Posterior cingulate gyrus (tissue), 11 donors: ENCODE measurements at regions of chr14 and their contacts with region 1.

Region 1: DNA sequence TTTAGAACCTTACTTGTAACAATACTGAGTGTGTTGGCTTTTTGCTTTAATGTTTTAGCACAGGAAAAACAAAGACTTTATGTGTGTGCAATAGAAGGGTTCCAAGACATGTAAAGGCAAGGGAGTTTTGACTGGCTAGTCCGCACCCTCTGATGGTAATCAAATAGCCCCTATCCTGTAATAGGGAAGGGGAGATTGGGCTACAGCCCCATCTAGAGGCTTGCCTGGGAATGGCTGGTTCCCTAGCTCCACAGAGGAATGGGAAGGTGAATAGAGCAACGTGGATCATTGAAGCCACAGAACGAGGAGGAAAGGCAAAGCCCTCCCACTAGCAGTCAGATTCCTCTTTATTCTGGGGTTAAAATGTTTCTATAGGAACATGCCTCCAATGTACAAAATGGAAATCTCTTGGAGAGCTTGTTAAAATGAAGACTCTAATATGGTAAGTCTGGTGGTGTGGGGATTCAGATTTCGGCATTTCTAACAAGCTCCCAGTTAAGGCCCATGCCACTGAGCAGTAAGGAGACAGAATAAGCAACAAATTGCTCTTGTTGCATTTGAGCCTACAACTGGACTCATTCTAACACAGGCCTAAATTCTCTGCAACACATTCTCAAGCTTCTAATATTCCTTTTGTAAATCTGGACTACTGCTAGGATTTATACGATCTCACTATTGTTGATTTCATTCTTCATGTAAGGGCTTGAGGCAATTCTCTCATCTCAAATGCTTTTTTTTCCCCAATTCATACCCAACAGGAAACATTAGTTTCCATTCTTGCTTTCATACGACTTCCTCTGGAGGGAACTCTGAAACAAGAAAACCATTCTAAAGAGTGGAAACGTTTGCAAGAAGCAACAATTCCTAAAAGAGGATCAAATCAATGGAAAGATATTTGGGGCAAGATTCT is 57.1 kb downstream of the NIN start:
- DNase-seq: peak in 6 of 10 donors; percentile 66 to 91 (median 70)

Region 2: DNA sequence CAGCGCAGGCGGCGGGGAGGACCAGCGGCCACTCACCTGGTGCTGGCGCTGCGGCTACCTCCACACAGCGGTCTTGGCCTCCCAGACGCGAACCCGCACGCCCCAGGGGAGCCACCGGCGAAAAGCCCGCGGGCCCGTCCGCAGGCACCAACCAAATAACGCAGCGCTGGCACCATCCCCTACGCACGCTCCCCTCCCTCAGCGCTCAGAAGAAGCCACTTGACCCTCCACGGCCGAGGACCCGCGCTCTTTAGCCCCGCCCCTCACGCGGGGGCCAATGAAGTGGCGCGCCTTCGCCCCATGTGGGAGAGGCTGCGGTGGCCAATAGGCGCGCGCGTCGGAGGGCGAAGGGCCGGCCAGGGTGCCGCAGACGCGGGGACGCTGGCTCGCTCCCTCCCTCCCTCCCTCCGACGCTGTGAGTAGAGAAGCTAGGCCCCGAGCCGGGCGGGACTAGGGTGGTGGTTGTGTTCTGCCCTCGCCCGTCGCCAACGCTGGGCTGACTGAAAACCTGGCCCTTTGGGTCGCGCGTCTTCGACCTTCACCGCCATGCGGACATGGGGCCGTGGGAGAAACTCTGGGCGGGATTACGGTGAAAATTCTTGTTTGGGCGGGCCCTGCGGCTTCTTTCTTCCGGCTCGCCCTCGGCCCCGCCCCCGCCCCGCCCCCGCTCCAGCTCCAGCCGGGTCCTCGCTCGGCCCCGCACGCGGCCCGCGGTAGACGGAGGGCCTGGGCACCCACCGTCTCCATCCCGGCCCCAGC is 461.7 kb before region 1 on chr14 and contains the starts of genes DMAC2L and L2HGDH:
- intact Hi-C with region 1: loop called (anchors 10 kb)
- DNase-seq: peak; percentile 88 to 99 (median 93)

Region 3: DNA sequence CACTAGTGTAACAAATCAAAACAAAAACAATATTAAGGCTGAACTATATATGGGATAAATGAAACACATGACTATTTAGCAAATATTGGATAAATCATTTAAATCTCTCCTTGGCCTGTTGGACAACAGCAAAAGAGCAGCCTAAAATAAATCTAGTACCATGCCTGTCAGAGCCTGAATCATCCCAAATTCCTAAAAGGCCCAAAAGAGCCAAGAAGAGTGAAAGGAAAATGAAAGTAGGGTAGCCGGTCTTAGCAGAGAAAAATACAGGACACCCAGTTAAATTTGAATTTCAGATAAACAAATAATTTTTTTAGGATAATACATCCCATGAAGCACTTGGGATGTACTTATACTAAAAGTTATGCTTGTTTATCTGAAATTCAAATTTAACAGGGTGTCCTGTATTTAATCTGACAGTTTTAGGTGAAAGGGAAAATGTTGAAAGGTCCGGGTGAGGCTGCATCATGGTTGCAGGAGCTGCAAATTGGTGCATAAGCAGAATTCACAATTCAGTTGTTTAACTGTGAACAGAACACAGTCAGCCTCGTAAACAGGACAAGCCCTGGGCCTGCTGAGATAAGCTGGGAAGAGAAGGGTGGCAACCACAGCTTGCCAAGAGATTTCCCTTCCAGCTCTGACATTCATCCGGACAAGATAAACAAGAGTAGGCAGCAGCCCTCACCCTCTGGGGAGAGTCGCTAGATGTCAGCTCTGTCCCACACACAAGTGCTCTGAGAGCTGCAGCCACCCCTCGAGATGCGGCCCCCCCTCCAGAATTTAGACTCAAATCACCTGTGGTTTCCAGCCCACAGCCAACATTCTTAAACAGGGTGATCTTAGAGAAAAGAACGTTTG is 431.4 kb before region 1 on chr14:
- intact Hi-C with region 1: loop called (anchors 10 kb)
- DNase-seq: peak; percentile 50 to 95 (median 75)

Region 4: GRCh38 chr14:50542941-50543418 is 230.9 kb before region 1 on chr14:
- intact Hi-C with region 1: loop called (anchors 5 kb)
- DNase-seq: peak in 1 of 10 donors; percentile 35

Region 5: GRCh38 chr14:50599700-50600444 is 174.0 kb before region 1 on chr14:
- intact Hi-C with region 1: loop called (anchors 2 kb)
- DNase-seq: no peak

Region 6: DNA sequence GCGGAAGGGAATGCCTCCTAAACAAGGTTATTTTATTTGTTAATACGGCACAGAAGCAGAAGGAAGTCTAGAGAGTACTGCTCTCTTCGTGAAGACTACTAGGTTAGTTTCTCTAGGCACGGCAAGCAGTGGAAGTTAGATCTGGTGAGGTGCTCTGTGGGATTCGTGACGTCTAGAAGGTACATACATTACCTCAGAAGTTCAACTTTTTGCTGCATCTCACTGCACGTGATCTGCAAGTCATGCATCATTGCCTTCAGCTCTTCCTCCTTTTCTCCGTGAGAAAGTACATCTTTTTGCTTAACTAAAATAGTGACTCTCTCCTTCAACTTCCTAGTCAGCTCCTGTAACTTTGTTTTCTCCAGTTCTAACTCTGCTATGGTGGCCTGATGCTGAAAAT is 17.6 kb before region 1 on chr14:
- intact Hi-C with region 1: no loop called
- DNase-seq: no peak